ENCODE measurements at regions of chr1 and their contacts with region 1.

Region 1: DNA sequence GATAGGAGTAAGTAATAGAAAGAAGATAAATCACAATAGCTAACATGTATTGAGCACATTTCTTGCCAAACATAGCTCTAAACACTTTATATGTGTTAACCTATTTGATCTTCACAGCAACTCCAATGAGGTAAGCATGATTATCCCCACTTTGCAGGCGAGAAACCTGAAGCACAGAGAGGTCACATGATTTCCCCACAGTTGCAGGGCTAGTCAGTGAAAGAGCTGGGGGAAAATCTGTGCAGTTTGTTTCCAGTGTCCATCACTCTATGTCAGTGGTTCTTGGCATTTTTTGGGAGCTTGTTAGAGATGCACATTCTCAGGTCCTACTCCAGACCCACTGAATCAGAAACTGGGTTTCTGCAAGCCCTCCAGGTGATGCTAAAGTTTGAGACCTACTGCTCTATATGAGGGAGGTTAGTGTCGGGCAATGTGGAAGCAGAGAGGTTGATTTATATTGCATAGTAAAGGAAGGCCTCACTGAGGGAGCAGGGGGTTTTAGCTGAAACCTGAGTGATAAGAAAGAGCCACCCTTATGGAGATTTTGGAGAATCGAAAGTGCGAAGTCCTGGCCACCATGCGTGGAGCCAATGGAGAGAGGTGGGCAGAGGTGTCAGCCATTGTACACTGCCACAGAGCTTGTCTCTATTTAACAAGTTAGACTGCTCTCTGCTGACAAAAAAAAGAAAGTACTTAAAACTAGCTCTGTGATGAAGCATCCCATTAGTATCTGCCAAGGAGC is 20.9 kb downstream of the MCOLN3 start:
- DNase-seq: peak; percentile 70
- ATAC-seq: peak; percentile 94
- H3K4me3 ChIP-seq: peak overlapping the region in 3 of 5 experiments; percentile 16 to 40 (median 35)
- H3K4me3 Mint-ChIP-seq: peak overlapping the region; percentile 75
- H3K27ac ChIP-seq: peak overlapping the region in 1 of 2 donors; percentile 25
- H3K27ac Mint-ChIP-seq: peak overlapping the region; percentile 86
- H3K4me1 ChIP-seq: peaks cover 0 to 6% of the 10 kb centered on the region in 2 donors
- H3K4me1 Mint-ChIP-seq: peaks cover 6% of the 10 kb centered on the region
- H3K27me3 ChIP-seq: no peaks in the 10 kb centered on the region
- H3K27me3 Mint-ChIP-seq: no peaks in the 10 kb centered on the region
- CTCF ChIP-seq: peak; percentile 59

Region 2: GRCh38 chr1:84936116-84936810 is 91.2 kb before region 1 on chr1:
- CTCF ChIA-PET with region 1: interaction called, 458 read pairs
- POLR2A ChIA-PET with region 1: no interaction called
- intact Hi-C with region 1: no loop called
- DNase-seq: peak; percentile 68
- ATAC-seq: peak; percentile 62
- H3K4me3 ChIP-seq: no peak overlapping the region
- H3K4me3 Mint-ChIP-seq: no peak overlapping the region
- H3K27ac ChIP-seq: no peak overlapping the region
- H3K27ac Mint-ChIP-seq: no peak overlapping the region
- H3K4me1 ChIP-seq: peaks cover 0 to 3% of the 10 kb centered on the region in 2 donors
- H3K4me1 Mint-ChIP-seq: peaks cover 2% of the 10 kb centered on the region
- H3K27me3 ChIP-seq: no peaks in the 10 kb centered on the region
- H3K27me3 Mint-ChIP-seq: no peaks in the 10 kb centered on the region
- CTCF ChIP-seq: peak; percentile 98

Region 3: DNA sequence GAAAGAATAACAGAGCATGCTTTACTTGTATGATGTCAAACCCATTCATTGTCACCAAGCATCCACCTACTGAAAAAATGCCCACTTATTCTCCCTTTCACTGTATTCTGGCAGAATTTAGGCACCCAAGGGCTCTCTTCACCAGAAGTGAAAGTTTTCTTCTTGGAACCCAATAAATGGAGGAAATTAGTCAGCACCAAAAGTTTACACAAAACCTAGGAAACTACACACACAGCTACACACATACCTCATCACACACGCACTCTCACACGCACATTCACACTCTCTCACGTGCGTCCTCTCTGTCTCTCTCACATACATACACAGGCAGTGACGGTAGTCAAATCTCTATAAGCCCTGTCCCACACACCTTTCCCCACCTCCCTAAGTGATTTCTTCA is 68.1 kb before region 1 on chr1:
- CTCF ChIA-PET with region 1: interaction called, 21 read pairs
- POLR2A ChIA-PET with region 1: no interaction called
- intact Hi-C with region 1: no loop called
- DNase-seq: no peak
- ATAC-seq: no peak
- H3K4me3 ChIP-seq: no peak overlapping the region
- H3K4me3 Mint-ChIP-seq: no peak overlapping the region
- H3K27ac ChIP-seq: no peak overlapping the region
- H3K27ac Mint-ChIP-seq: no peak overlapping the region
- H3K4me1 ChIP-seq: no peaks in the 10 kb centered on the region
- H3K4me1 Mint-ChIP-seq: peaks cover 3% of the 10 kb centered on the region
- H3K27me3 ChIP-seq: no peaks in the 10 kb centered on the region
- H3K27me3 Mint-ChIP-seq: no peaks in the 10 kb centered on the region
- CTCF ChIP-seq: no peak

Region 4: DNA sequence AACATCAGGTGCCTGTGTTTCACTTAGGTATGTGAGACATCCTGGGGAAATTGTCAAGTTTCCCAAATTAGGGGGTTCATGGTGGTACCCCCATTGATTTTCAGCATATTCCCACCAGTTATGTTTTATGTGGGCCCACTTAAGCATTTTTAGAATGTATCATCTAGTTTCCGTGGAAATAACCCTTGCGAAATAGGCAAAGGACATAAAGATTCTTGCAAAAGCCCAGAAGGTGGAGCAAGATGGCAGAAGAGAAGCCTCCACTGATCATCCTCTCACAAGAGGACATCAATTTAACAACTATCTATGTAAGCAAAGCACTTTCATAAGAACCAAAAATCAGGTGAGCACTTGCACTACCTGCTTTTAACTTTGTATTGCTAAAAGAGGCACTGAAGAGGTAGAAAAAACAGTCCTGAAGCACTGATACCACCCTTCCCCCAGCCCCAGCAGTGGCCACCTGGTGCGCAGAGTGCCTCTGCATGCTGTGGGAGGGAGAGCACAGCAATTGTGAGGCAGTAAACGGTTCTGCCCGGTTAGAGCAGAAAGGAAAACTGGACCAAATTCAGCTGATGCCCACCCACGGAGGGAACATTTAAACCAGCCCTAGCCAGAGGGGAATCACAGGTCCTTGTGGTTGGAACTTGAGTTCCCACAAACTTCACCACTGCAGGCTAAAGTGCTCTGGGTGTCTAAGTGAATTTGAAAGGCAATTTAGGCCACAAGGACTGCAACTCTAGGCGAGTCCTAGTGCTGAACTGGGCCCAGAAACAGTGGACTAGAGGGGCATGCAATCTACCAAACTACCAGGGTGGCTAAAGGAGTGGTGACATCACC is 53.7 kb before region 1 on chr1:
- CTCF ChIA-PET with region 1: interaction called, 13 read pairs
- POLR2A ChIA-PET with region 1: no interaction called
- intact Hi-C with region 1: loop called (anchors 1 kb)
- DNase-seq: no peak
- ATAC-seq: peak; percentile 24
- H3K4me3 ChIP-seq: no peak overlapping the region
- H3K4me3 Mint-ChIP-seq: peak overlapping the region; percentile 27
- H3K27ac ChIP-seq: no peak overlapping the region
- H3K27ac Mint-ChIP-seq: peak overlapping the region; percentile 43
- H3K4me1 ChIP-seq: peaks cover 22 to 37% of the 10 kb centered on the region in 2 donors
- H3K4me1 Mint-ChIP-seq: peaks cover 59% of the 10 kb centered on the region
- H3K27me3 ChIP-seq: no peaks in the 10 kb centered on the region
- H3K27me3 Mint-ChIP-seq: no peaks in the 10 kb centered on the region
- CTCF ChIP-seq: no peak

Region 5: DNA sequence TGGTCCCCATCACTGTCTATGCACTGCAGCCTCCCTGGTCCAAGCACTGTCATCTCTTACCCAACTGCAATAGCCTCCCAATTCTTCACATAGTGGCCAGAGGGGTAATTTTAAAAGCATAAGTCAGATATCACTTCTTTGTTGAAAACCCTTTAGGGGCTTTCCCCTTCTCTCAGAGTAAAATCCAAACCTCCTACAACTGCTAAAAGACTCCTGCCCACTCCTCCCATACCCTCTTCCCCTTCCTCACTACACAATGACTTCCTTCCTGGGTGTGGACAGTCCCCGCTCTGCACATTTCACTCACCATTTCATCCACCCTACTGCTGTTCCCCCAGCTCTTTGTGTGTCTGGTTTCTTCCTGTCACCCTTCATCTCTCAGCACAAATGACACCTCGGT is 38.8 kb before region 1 on chr1:
- CTCF ChIA-PET with region 1: interaction called, 17 read pairs
- POLR2A ChIA-PET with region 1: no interaction called
- intact Hi-C with region 1: loop called (anchors 5 kb)
- DNase-seq: peak; percentile 34
- ATAC-seq: peak; percentile 56
- H3K4me3 ChIP-seq: no peak overlapping the region
- H3K4me3 Mint-ChIP-seq: peak overlapping the region; percentile 8
- H3K27ac ChIP-seq: no peak overlapping the region
- H3K27ac Mint-ChIP-seq: peak overlapping the region; percentile 3
- H3K4me1 ChIP-seq: peaks cover 33 to 48% of the 10 kb centered on the region in 2 donors
- H3K4me1 Mint-ChIP-seq: peaks cover 57% of the 10 kb centered on the region
- H3K27me3 ChIP-seq: no peaks in the 10 kb centered on the region
- H3K27me3 Mint-ChIP-seq: no peaks in the 10 kb centered on the region
- CTCF ChIP-seq: no peak

Region 6: GRCh38 chr1:85091671-85092280 is 64.4 kb after region 1 on chr1:
- CTCF ChIA-PET with region 1: no interaction called
- POLR2A ChIA-PET with region 1: no interaction called
- intact Hi-C with region 1: no loop called
- DNase-seq: no peak
- ATAC-seq: no peak
- H3K4me3 ChIP-seq: no peak overlapping the region
- H3K4me3 Mint-ChIP-seq: peak overlapping the region; percentile 24
- H3K27ac ChIP-seq: no peak overlapping the region
- H3K27ac Mint-ChIP-seq: no peak overlapping the region
- H3K4me1 ChIP-seq: peaks cover 4 to 7% of the 10 kb centered on the region in 2 donors
- H3K4me1 Mint-ChIP-seq: peaks cover 2% of the 10 kb centered on the region
- H3K27me3 ChIP-seq: peaks cover 0 to 17% (median 12%) of the 10 kb centered on the region in 4 experiments
- H3K27me3 Mint-ChIP-seq: peaks cover 21% of the 10 kb centered on the region
- CTCF ChIP-seq: no peak